ENCODE measurements at regions of chr18 and their contacts with region 1.

Region 1: GRCh38 chr18:55243857-55244256 is 284.6 kb upstream of the CCDC68 start:
- DNase-seq: peak in 1 of 2 donors; percentile 89
- ATAC-seq: peak; percentile 75 to 91 (median 84)
- H3K4me3 ChIP-seq: peak overlapping the region in 1 of 10 donors; percentile 9
- H3K27ac ChIP-seq: peak overlapping the region; percentile 55 to 89 (median 76)
- H3K4me1 ChIP-seq: peaks cover 21 to 100% (median 80%) of the 10 kb centered on the region in 9 donors
- H3K27me3 ChIP-seq: no peaks in the 10 kb centered on the region
- CTCF ChIP-seq: no peak

Region 2: GRCh38 chr18:55869556-55870501 is 626.0 kb after region 1 on chr18:
- intact Hi-C with region 1: loop called in 5 of 10 experiments (anchors 5 to 10 kb)
- DNase-seq: peak in 1 of 2 donors; percentile 24
- ATAC-seq: peak in 7 of 8 donors; percentile 84 to 90 (median 87)
- H3K4me3 ChIP-seq: peak overlapping the region in 1 of 10 donors; percentile 5
- H3K27ac ChIP-seq: peak overlapping the region in 8 of 10 donors; percentile 7 to 66 (median 52)
- H3K4me1 ChIP-seq: peaks cover 0 to 51% (median 20%) of the 10 kb centered on the region in 9 donors
- H3K27me3 ChIP-seq: no peaks in the 10 kb centered on the region
- CTCF ChIP-seq: no peak